ENCODE measurements at regions of chr20 and their contacts with region 1.

Region 1: DNA sequence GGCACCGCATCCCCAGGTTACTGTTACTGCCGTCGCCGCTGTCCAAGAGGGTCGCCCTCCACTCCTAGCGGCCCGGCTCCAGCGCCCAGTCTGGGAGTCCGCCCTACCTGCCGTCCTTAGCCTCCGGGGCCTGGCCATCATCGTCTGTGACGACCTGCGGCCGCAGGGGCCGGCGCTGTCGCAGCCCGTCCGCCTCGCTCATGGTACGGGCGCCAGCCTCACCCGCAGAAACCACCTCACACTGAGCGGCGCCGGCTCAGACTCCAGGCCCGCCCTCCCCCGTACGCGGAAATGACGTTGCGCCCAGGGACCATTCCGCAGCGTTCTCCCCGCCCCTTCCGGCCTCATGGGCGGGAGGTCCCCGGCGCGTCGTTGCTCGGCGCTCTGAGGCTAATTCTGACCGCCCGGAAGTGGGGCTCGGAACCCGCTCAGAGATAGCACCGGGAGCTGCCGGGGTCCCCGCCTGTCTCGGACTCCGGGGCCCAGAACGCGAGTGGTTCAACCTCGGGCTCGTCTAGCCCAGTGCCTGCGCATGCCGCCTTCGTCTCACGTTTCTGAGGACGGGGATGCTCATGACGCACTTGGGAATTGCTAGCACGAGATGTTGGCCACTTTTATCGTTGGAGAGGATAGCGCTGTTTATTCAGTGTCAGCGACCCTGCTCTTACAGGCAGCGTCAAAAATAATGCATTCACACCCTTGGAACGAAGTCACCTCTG is at the start of gene APMAP:
- DNase-seq: peak; percentile 92 to 99 (median 97)
- ATAC-seq: peak; percentile 89
- H3K4me3 ChIP-seq: peak within 1 kb of the TSS; percentile 91 to 99
- H3K4me3 Mint-ChIP-seq: peak within 1 kb of the TSS; percentile 95
- H3K27ac ChIP-seq: peak within 1 kb of the TSS; percentile 94 to 96
- H3K27ac Mint-ChIP-seq: peak within 1 kb of the TSS; percentile 97
- H3K4me1 ChIP-seq: peaks cover 45% of the 10 kb centered on the region
- H3K4me1 Mint-ChIP-seq: peaks cover 65% of the 10 kb centered on the region
- H3K27me3 ChIP-seq: no peaks in the 10 kb centered on the region
- H3K27me3 Mint-ChIP-seq: no peaks in the 10 kb centered on the region
- CTCF ChIP-seq: no peak
- total RNA-seq, gene APMAP: 31.0 to 31.8 TPM

Region 2: DNA sequence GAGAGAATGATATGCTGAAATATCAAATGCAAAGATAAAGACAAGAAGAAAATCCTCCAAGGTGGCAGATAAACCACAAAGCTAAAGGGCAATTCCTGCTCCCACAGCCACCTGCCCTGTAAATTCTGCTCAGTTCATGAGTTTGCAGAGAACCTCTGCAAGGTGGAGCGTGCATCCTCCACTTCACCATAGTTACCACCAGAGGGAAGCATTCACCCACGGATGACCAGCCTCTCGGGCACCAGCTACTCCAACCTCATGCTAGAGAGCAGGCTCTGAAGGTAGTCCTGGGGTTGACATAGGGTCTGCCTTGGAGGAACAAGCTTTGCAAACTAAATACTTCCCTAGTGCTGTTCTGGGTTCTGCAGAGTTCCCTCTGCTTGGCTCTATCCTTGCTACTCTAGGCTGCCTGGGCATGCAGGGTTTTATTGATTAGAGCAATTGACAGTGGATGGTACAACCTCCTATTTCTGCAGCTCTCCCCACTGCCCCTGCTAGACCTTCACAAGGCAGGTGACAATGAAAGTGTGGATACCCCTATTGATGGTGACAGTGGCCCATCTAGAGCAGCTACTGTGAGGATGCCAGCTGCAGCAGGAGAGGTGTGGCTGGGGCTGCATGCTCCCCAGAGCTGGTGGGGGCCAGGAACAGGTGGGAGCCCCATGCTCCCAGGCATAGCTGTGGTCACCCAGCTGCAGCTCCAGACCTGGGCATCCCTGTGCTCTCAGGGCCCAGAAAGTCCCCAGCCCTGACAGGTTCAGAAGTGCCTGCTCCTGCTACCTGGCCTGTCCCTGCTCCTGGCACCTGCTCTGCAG is 1055.1 kb before region 1 on chr20:
- CTCF ChIA-PET with region 1: no interaction called
- POLR2A ChIA-PET with region 1: no interaction called
- intact Hi-C with region 1: loop called (anchors 2 to 5 kb)
- DNase-seq: peak; percentile 43 to 82 (median 66)
- ATAC-seq: peak; percentile 96
- H3K4me3 ChIP-seq: no peak overlapping the region
- H3K4me3 Mint-ChIP-seq: no peak overlapping the region
- H3K27ac ChIP-seq: no peak overlapping the region
- H3K27ac Mint-ChIP-seq: no peak overlapping the region
- H3K4me1 ChIP-seq: no peaks in the 10 kb centered on the region
- H3K4me1 Mint-ChIP-seq: no peaks in the 10 kb centered on the region
- H3K27me3 ChIP-seq: no peaks in the 10 kb centered on the region
- H3K27me3 Mint-ChIP-seq: no peaks in the 10 kb centered on the region
- CTCF ChIP-seq: peak; percentile 71

Region 3: DNA sequence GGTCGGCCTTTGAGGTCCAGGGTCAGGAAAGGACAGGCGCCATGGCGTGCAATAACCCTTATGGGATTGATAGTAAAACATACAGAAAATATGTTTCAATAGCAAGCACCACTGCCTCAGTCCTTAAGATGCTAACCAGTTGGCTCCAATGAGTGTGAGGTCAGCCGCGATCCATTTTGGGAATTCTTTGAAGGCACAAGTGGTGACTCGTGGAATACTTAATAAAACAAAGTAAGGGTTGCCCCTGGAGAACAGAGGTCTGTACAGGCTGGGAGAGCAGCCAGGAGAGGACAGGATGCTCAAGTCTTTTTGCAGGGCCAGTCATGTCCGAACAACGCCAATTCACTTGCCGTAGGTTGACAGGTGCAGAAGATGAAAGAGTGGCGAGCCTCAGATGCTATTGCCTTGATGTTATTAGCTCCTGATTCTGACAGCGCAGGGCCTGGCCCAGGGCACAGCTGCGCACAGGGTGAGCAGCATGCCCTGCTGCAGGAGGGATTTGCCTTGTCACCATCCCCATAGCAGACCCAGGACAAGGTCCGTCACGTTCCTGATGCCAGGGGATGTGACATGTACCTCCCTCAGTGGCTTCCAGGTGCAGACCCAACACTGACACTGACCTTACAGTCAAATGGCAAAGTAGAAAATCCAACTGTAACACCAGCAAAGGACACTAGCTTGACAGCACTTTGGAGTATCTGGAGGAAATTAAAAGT is 501.4 kb before region 1 on chr20:
- CTCF ChIA-PET with region 1: no interaction called
- POLR2A ChIA-PET with region 1: no interaction called
- intact Hi-C with region 1: no loop called
- DNase-seq: no peak
- ATAC-seq: no peak
- H3K4me3 ChIP-seq: no peak overlapping the region
- H3K4me3 Mint-ChIP-seq: no peak overlapping the region
- H3K27ac ChIP-seq: no peak overlapping the region
- H3K27ac Mint-ChIP-seq: no peak overlapping the region
- H3K4me1 ChIP-seq: no peaks in the 10 kb centered on the region
- H3K4me1 Mint-ChIP-seq: no peaks in the 10 kb centered on the region
- H3K27me3 ChIP-seq: no peaks in the 10 kb centered on the region
- H3K27me3 Mint-ChIP-seq: no peaks in the 10 kb centered on the region
- CTCF ChIP-seq: no peak

Region 4: GRCh38 chr20:24948939-24949679 is 43.5 kb before region 1 on chr20 and contains the start of gene CST7:
- CTCF ChIA-PET with region 1: no interaction called
- POLR2A ChIA-PET with region 1: interaction called, 3 read pairs
- intact Hi-C with region 1: loop called (anchors 1 to 2 kb)
- DNase-seq: peak; percentile 76 to 96 (median 87)
- ATAC-seq: peak; percentile 90
- H3K4me3 ChIP-seq: peak within 1 kb of the TSS; percentile 55 to 90
- H3K4me3 Mint-ChIP-seq: peak within 1 kb of the TSS; percentile 86
- H3K27ac ChIP-seq: peak within 1 kb of the TSS; percentile 73 to 95
- H3K27ac Mint-ChIP-seq: peak within 1 kb of the TSS; percentile 93
- H3K4me1 ChIP-seq: peaks cover 23% of the 10 kb centered on the region
- H3K4me1 Mint-ChIP-seq: peaks cover 63% of the 10 kb centered on the region
- H3K27me3 ChIP-seq: no peaks in the 10 kb centered on the region
- H3K27me3 Mint-ChIP-seq: no peaks in the 10 kb centered on the region
- CTCF ChIP-seq: no peak
- total RNA-seq, gene CST7: 53.3 to 54.6 TPM

Region 5: GRCh38 chr20:25057234-25058050 is 64.8 kb after region 1 on chr20:
- CTCF ChIA-PET with region 1: interaction called, 274 read pairs
- POLR2A ChIA-PET with region 1: interaction called, 47 read pairs
- intact Hi-C with region 1: loop called in 1 of 2 experiments (anchors 1 kb)
- DNase-seq: peak; percentile 62 to 94 (median 81)
- ATAC-seq: peak; percentile 33
- H3K4me3 ChIP-seq: peak overlapping the region; percentile 62 to 90
- H3K4me3 Mint-ChIP-seq: peak overlapping the region; percentile 87
- H3K27ac ChIP-seq: peak overlapping the region; percentile 71 to 83
- H3K27ac Mint-ChIP-seq: peak overlapping the region; percentile 95
- H3K4me1 ChIP-seq: peaks cover 52% of the 10 kb centered on the region
- H3K4me1 Mint-ChIP-seq: peaks cover 52% of the 10 kb centered on the region
- H3K27me3 ChIP-seq: no peaks in the 10 kb centered on the region
- H3K27me3 Mint-ChIP-seq: no peaks in the 10 kb centered on the region
- CTCF ChIP-seq: no peak

Region 6: GRCh38 chr20:25178563-25179438 is 186.2 kb after region 1 on chr20:
- CTCF ChIA-PET with region 1: interaction called, 29 read pairs
- POLR2A ChIA-PET with region 1: no interaction called
- intact Hi-C with region 1: loop called (anchors 1 kb)
- DNase-seq: peak in 3 of 9 experiments; percentile 8 to 67 (median 56)
- ATAC-seq: peak; percentile 71
- H3K4me3 ChIP-seq: no peak overlapping the region
- H3K4me3 Mint-ChIP-seq: no peak overlapping the region
- H3K27ac ChIP-seq: no peak overlapping the region
- H3K27ac Mint-ChIP-seq: no peak overlapping the region
- H3K4me1 ChIP-seq: no peaks in the 10 kb centered on the region
- H3K4me1 Mint-ChIP-seq: no peaks in the 10 kb centered on the region
- H3K27me3 ChIP-seq: no peaks in the 10 kb centered on the region
- H3K27me3 Mint-ChIP-seq: peaks cover 4% of the 10 kb centered on the region
- CTCF ChIP-seq: peak; percentile 77

Region 7: GRCh38 chr20:25294459-25295385 is 302.1 kb after region 1 on chr20:
- CTCF ChIA-PET with region 1: interaction called, 3 read pairs
- POLR2A ChIA-PET with region 1: no interaction called
- intact Hi-C with region 1: loop called (anchors 1 to 2 kb)
- DNase-seq: peak; percentile 24 to 76 (median 64)
- ATAC-seq: peak; percentile 88
- H3K4me3 ChIP-seq: no peak overlapping the region
- H3K4me3 Mint-ChIP-seq: no peak overlapping the region
- H3K27ac ChIP-seq: no peak overlapping the region
- H3K27ac Mint-ChIP-seq: no peak overlapping the region
- H3K4me1 ChIP-seq: peaks cover 5% of the 10 kb centered on the region
- H3K4me1 Mint-ChIP-seq: peaks cover 4% of the 10 kb centered on the region
- H3K27me3 ChIP-seq: no peaks in the 10 kb centered on the region
- H3K27me3 Mint-ChIP-seq: no peaks in the 10 kb centered on the region
- CTCF ChIP-seq: peak; percentile 77

Region 8: DNA sequence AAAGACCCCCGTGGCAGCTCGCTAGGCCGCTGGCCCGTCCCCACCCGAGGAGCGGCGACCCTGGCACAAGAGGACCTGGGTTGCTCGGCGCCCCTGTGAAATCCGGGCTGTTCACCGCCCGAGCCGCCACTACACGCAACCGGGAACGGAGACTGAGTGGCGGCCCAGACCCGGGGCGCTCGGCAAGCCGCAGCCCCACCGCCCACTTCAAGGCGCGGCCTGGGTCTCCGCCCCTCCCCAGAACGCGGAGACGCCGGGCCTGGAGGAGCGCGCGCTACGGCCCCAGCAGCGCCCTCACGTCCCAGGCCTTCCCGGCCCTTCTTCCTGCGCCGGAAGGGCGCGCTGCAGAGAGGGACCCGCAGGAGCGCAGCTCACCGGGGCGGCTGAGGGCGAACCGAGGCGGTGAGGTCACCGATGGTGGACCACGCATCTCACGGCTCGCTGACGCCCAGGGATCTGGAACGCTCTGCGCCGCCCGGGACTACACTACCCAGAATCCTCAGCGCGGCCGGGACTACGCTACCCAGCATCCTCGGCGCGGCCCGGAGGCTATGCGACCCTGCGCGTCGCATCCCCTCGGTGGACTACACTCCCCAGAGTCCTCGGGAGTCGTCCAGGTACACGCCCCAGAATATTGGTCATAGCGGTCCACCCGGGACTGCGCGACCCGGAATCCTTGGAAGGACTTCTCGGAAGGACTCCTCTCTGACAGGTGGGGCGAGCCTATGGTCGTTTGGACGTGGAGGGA is 703.9 kb after region 1 on chr20 and contains the start of gene ZNF337:
- CTCF ChIA-PET with region 1: no interaction called
- POLR2A ChIA-PET with region 1: no interaction called
- intact Hi-C with region 1: loop called in 1 of 2 experiments (anchors 5 kb)
- DNase-seq: peak; percentile 85 to 95 (median 92)
- ATAC-seq: peak; percentile 98
- H3K4me3 ChIP-seq: peak within 1 kb of the TSS; percentile 62 to 78
- H3K4me3 Mint-ChIP-seq: peak within 1 kb of the TSS; percentile 95
- H3K27ac ChIP-seq: peak within 1 kb of the TSS; percentile 73 to 75
- H3K27ac Mint-ChIP-seq: peak within 1 kb of the TSS; percentile 93
- H3K4me1 ChIP-seq: peaks cover 8% of the 10 kb centered on the region
- H3K4me1 Mint-ChIP-seq: peaks cover 42% of the 10 kb centered on the region
- H3K27me3 ChIP-seq: no peaks in the 10 kb centered on the region
- H3K27me3 Mint-ChIP-seq: no peaks in the 10 kb centered on the region
- CTCF ChIP-seq: no peak
- total RNA-seq, gene ZNF337: 21.5 TPM